Transverse colon (tissue), 4 donors: ENCODE measurements at regions of chr5 and their contacts with region 1.

Region 1: GRCh38 chr5:116137544-116138378 is 52.9 kb downstream of the COMMD10 start:
- DNase-seq: no peak
- H3K4me3 ChIP-seq: no peak overlapping the region
- H3K27ac ChIP-seq: no peak overlapping the region
- H3K4me1 ChIP-seq: peaks cover 0 to 12% (median 0%) of the 10 kb centered on the region in 4 donors
- H3K27me3 ChIP-seq: no peaks in the 10 kb centered on the region
- CTCF ChIP-seq: peak; percentile 63 to 77 (median 76)
- EP300 ChIP-seq: no peak
- POLR2A ChIP-seq: no peak

Region 2: GRCh38 chr5:116361171-116361967 is 223.6 kb after region 1 on chr5:
- in situ Hi-C with region 1: loop called in 1 of 4 experiments (anchors 25 kb)
- intact Hi-C with region 1: no loop called
- DNase-seq: peak; percentile 69
- H3K4me3 ChIP-seq: peak overlapping the region; percentile 12 to 39 (median 23)
- H3K27ac ChIP-seq: peak overlapping the region; percentile 24 to 70 (median 52)
- H3K4me1 ChIP-seq: peaks cover 13 to 37% (median 23%) of the 10 kb centered on the region in 4 donors
- H3K27me3 ChIP-seq: no peaks in the 10 kb centered on the region
- CTCF ChIP-seq: peak in 4 of 5 experiments; percentile 18 to 40 (median 26)
- EP300 ChIP-seq: no peak
- POLR2A ChIP-seq: no peak

Region 3: DNA sequence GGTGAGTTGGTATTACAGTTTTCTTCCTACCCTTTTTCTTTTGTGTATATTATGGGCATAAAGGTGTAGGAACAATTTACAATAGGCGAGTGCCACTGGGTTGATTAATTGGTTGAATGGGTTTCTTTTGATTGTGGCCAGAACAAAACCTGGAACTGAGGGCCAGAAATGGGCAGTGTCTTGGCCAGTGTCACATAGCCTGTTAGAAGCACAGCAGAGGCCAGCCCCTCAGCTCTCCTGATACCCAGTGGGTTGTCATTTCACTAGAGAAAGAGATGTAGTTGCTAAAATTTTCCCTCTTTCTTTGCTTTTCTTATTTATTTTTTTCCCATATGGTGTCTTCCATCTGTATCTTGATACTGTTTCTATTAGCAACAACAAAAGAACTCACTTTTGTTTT is 475.7 kb after region 1 on chr5:
- in situ Hi-C with region 1: no loop called
- intact Hi-C with region 1: no loop called
- DNase-seq: no peak
- H3K4me3 ChIP-seq: no peak overlapping the region
- H3K27ac ChIP-seq: no peak overlapping the region
- H3K4me1 ChIP-seq: no peaks in the 10 kb centered on the region
- H3K27me3 ChIP-seq: no peaks in the 10 kb centered on the region
- CTCF ChIP-seq: no peak
- EP300 ChIP-seq: no peak
- POLR2A ChIP-seq: no peak

Region 4: GRCh38 chr5:116947691-116948528 is 810.1 kb after region 1 on chr5:
- in situ Hi-C with region 1: loop called in 3 of 4 experiments (anchors 25 kb)
- intact Hi-C with region 1: no loop called
- DNase-seq: peak; percentile 77
- H3K4me3 ChIP-seq: no peak overlapping the region
- H3K27ac ChIP-seq: no peak overlapping the region
- H3K4me1 ChIP-seq: no peaks in the 10 kb centered on the region
- H3K27me3 ChIP-seq: no peaks in the 10 kb centered on the region
- CTCF ChIP-seq: peak; percentile 63 to 69 (median 68)
- EP300 ChIP-seq: no peak
- POLR2A ChIP-seq: no peak